A549 (cell line): ENCODE measurements at regions of chr2 and their contacts with region 1.

Region 1: GRCh38 chr2:101419096-101419663 is 31.9 kb upstream of the CREG2 start:
- DNase-seq: peak; percentile 53 to 70
- ATAC-seq: peak; percentile 85 to 94; a peak in 5 of 6 replicates
- H3K4me3 ChIP-seq: no peak overlapping the region
- H3K27ac ChIP-seq: peak overlapping the region; percentile 1 to 52; a peak in 4 of 6 replicates
- H3K4me1 ChIP-seq: no peaks in the 10 kb centered on the region
- CTCF ChIP-seq: peak; percentile 90
- EP300 ChIP-seq: no peak
- POLR2A ChIP-seq: no peak
- RAD21 ChIP-seq: peak; percentile 92 to 94

Region 2: GRCh38 chr2:101396316-101396717 is 22.9 kb before region 1 on chr2:
- CTCF ChIA-PET with region 1: interaction called, 12 read pairs
- POLR2A ChIA-PET with region 1: no interaction called
- DNase-seq: peak; percentile 65 to 76
- ATAC-seq: peak; percentile 86 to 93
- H3K4me3 ChIP-seq: peak overlapping the region; percentile 9; the same call in 2 of the 3 replicates
- H3K27ac ChIP-seq: peak overlapping the region; percentile 81 to 85
- H3K4me1 ChIP-seq: peaks cover 25% of the 10 kb centered on the region
- CTCF ChIP-seq: no peak
- EP300 ChIP-seq: no peak
- POLR2A ChIP-seq: no peak
- RAD21 ChIP-seq: no peak

Region 3: DNA sequence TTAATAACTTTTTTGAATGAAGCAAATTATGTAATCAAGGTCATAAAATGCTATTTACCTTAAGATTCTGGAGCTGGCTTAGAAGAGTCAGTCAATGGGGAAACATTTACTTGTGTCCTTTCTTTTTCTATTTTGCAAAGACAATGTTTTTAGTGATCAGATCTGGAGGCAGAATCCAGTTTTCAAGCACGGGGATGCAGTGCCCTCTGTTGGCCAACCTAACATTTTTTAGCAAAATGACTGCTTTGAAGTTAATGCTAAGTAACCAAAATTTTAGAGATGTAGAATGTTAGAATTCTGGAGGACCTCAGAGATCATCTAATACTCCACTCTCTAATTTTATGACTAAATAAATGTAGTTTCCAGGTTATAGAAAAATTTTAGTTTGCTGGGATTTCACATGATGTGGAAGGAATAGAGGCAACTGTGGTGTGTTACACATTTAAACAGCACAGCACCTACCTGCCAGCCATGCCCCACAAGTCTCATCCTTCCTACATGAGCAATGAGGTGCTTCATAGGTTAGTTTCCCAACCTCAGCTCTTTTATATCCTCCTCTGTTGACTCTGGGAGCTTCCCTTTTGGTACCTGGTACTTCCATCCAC is 1030.3 kb after region 1 on chr2:
- CTCF ChIA-PET with region 1: no interaction called
- POLR2A ChIA-PET with region 1: no interaction called
- DNase-seq: peak; percentile 28 to 42
- ATAC-seq: peak in 1 of 2 experiments; percentile 66; a peak in 4 of 6 replicates
- H3K4me3 ChIP-seq: no peak overlapping the region
- H3K27ac ChIP-seq: no peak overlapping the region
- H3K4me1 ChIP-seq: no peaks in the 10 kb centered on the region
- CTCF ChIP-seq: peak; percentile 90
- EP300 ChIP-seq: no peak
- POLR2A ChIP-seq: no peak
- RAD21 ChIP-seq: peak; percentile 82 to 83